AG04450 (cell line): ENCODE measurements at regions of chr17 and their contacts with region 1.

Region 1: DNA sequence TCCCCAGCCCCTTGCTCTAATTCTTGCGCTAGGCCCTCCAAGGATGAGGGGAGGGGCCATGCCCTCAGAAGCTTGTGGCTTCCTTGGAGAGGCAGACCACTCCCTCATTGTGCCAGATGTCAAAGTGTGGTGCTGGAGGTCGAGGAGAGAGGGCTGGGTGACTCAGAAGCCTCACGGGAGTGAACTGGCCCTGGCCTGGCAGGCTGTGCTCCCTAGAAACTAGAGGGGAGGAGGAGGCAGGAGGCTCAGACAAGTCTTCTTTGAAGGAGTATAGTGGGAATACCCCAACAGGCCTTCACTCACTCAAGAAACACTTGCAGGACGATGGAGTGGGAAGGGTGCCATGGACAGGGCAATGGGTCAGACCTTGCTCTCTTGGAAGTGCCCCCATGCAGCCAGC is 18.5 kb downstream of the ANKRD40 start:
- DNase-seq: no peak
- H3K4me3 ChIP-seq: no peak overlapping the region
- H3K27ac ChIP-seq: peak overlapping the region; percentile 52
- H3K27me3 ChIP-seq: no peaks in the 10 kb centered on the region
- CTCF ChIP-seq: no peak

Region 2: GRCh38 chr17:50440172-50440837 is 248.9 kb before region 1 on chr17:
- CTCF ChIA-PET with region 1: no interaction called
- POLR2A ChIA-PET with region 1: no interaction called
- DNase-seq: no peak
- H3K4me3 ChIP-seq: no peak overlapping the region
- H3K27ac ChIP-seq: no peak overlapping the region
- H3K27me3 ChIP-seq: no peaks in the 10 kb centered on the region
- CTCF ChIP-seq: no peak

Region 3: GRCh38 chr17:50478391-50479381 is 210.6 kb before region 1 on chr17 and contains the start of gene RSAD1:
- CTCF ChIA-PET with region 1: interaction called, 12 read pairs
- POLR2A ChIA-PET with region 1: no interaction called
- DNase-seq: peak; percentile 48
- H3K4me3 ChIP-seq: peak within 1 kb of the TSS; percentile 88
- H3K27ac ChIP-seq: peak within 1 kb of the TSS; percentile 73
- H3K27me3 ChIP-seq: no peaks in the 10 kb centered on the region
- CTCF ChIP-seq: peak; percentile 66
- polyA plus RNA-seq, gene RSAD1: 15.5 and 17.5 TPM in 2 replicates

Region 4: GRCh38 chr17:50626037-50626574 is 63.1 kb before region 1 on chr17:
- CTCF ChIA-PET with region 1: interaction called, 18 read pairs
- POLR2A ChIA-PET with region 1: interaction called, 4 read pairs
- DNase-seq: peak; percentile 37
- H3K4me3 ChIP-seq: no peak overlapping the region
- H3K27ac ChIP-seq: no peak overlapping the region
- H3K27me3 ChIP-seq: peaks cover 6% of the 10 kb centered on the region
- CTCF ChIP-seq: peak; percentile 76

Region 5: GRCh38 chr17:50638851-50639767 is 50.1 kb before region 1 on chr17:
- CTCF ChIA-PET with region 1: interaction called, 11 read pairs
- POLR2A ChIA-PET with region 1: interaction called, 6 read pairs
- DNase-seq: peak; percentile 89
- H3K4me3 ChIP-seq: 0 out of 2 replicates have a peak overlapping the region, but pooled peaks have one; percentile 13
- H3K27ac ChIP-seq: peak overlapping the region; percentile 92
- H3K27me3 ChIP-seq: no peaks in the 10 kb centered on the region
- CTCF ChIP-seq: no peak

Region 6: DNA sequence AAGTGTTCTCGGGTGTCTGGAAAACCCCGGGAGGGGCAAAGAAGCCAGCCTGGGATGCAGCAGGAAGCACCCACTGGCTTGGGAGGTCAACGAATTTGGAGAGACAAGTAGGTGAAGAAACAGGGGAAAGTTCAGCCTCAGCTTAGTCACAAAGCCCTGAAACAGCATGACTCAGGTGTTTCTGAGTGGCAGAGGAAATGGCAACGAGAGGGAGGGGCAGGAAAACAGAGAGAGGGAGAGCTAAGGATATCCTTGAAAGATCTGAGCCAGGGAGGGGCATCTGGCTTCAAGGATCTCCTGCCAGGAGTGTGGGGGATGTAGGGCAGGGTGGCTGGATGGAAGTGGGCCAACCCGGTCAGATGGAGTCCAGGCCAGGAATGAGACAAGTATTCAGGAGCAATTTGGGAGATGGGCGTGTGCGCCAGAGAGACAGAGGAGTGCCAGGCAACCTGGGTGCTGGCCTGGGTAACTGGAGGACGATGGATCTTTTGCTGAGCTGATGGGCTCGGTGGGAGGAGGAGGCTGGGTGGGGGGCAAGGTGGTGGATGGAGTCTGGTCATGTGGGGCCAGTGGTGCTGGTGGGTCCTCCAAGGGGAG is 27.4 kb before region 1 on chr17:
- CTCF ChIA-PET with region 1: interaction called, 10 read pairs
- POLR2A ChIA-PET with region 1: interaction called, 7 read pairs
- DNase-seq: peak; percentile 64
- H3K4me3 ChIP-seq: no peak overlapping the region
- H3K27ac ChIP-seq: peak overlapping the region; percentile 90
- H3K27me3 ChIP-seq: no peaks in the 10 kb centered on the region
- CTCF ChIP-seq: no peak

Region 7: DNA sequence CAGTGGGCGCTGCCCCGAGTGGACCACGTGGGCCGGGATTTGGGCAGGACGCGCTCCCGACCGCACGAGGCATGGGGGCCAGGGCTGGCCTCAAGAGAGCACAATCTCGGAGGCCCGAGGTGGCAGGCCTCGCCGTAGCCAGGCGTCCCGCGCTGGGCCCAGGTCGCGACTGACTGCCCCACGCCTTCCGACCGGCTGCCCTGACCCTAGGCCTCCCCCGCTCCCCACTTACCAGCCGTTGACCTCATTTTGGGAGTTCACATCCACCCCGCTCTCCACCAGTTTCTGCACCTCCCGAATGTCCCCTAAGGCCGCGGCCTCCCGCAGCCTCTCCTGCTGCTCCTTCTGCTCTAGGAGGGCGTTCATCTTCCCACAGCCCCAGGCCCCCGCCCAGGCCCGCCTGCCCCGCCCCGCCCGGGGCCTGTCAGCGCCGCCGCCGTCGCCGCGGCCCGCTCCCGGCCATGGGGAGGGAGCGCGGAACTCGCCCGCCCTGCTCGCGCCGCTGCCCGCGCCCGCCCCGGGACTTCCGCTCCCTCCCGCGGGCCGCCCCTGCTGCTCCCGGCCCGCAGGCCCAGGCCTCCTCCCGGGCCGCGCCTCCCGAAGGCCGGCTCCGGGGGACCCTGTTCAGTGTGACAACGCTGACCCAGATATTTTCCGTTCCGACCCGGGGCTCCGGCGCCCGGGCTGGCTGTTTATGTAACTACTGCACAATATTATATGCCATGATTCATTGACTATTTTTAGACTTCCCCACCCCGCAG is 18.2 kb after region 1 on chr17 and contains the start of gene ANKRD40:
- CTCF ChIA-PET with region 1: interaction called, 53 read pairs
- POLR2A ChIA-PET with region 1: no interaction called
- DNase-seq: peak; percentile 79
- H3K4me3 ChIP-seq: peak within 1 kb of the TSS; percentile 89
- H3K27ac ChIP-seq: peak within 1 kb of the TSS; percentile 93
- H3K27me3 ChIP-seq: no peaks in the 10 kb centered on the region
- CTCF ChIP-seq: no peak
- polyA plus RNA-seq, gene ANKRD40: 32.8 and 39.8 TPM in 2 replicates